Calu3 (cell line): ENCODE measurements at regions of chr10 and their contacts with region 1.

Region 1: GRCh38 chr10:31318854-31319601 is at the start of gene ZEB1:
- DNase-seq: peak; percentile 89
- H3K4me3 Mint-ChIP-seq: peak within 1 kb of the TSS; percentile 83
- H3K27ac Mint-ChIP-seq: peak within 1 kb of the TSS; percentile 82
- H3K4me1 Mint-ChIP-seq: peaks cover 27% of the 10 kb centered on the region
- H3K27me3 Mint-ChIP-seq: no peaks in the 10 kb centered on the region
- CTCF ChIP-seq: peak; percentile 59
- total RNA-seq, gene ZEB1: 7.1 and 10.3 TPM in 2 replicates

Region 2: GRCh38 chr10:31101123-31101522 is 217.9 kb before region 1 on chr10:
- CTCF ChIA-PET with region 1: no interaction called
- intact Hi-C with region 1: loop called (anchors 5 kb)
- DNase-seq: peak; percentile 73
- H3K4me3 Mint-ChIP-seq: peak overlapping the region; percentile 41
- H3K27ac Mint-ChIP-seq: peak overlapping the region; percentile 100
- H3K4me1 Mint-ChIP-seq: peaks cover 26% of the 10 kb centered on the region
- H3K27me3 Mint-ChIP-seq: no peaks in the 10 kb centered on the region
- CTCF ChIP-seq: no peak

Region 3: DNA sequence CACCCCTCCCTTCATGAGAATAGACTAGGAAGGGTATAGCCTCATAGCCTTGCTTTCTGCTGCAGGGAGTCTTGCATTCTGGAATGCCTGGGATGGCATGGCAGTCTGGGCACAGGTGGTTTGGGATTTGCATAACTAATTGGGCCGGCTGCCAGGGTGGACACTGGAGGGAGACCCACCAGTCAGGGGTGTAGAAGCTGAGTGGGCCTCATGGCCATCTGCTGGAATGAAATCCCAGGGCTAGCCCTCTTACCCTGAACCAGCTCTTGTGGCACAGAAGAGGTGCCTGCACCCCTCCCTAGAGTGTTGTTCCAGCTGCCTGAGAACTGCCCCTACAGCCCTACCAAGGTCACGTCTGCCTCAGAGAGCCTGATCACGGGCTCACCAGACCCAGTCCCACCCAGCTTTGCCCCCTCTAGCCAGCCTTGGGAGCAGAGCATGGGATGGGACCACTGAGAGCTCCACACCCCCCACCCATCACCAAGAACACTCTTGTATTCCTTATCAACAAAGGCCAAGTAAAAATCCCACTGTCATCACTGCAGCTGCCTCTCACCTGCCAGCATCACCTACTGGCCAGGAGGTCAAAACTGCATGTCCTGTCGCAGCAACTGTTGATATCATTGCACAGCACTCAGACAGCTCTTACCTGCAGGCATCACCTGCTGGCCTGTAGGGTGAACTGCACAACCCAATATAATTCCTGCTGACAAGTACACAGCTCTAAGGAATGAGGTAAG is 148.9 kb after region 1 on chr10:
- CTCF ChIA-PET with region 1: no interaction called
- intact Hi-C with region 1: loop called (anchors 5 kb)
- DNase-seq: peak; percentile 49
- H3K4me3 Mint-ChIP-seq: no peak overlapping the region
- H3K27ac Mint-ChIP-seq: no peak overlapping the region
- H3K4me1 Mint-ChIP-seq: no peaks in the 10 kb centered on the region
- H3K27me3 Mint-ChIP-seq: no peaks in the 10 kb centered on the region
- CTCF ChIP-seq: peak; percentile 80

Region 4: DNA sequence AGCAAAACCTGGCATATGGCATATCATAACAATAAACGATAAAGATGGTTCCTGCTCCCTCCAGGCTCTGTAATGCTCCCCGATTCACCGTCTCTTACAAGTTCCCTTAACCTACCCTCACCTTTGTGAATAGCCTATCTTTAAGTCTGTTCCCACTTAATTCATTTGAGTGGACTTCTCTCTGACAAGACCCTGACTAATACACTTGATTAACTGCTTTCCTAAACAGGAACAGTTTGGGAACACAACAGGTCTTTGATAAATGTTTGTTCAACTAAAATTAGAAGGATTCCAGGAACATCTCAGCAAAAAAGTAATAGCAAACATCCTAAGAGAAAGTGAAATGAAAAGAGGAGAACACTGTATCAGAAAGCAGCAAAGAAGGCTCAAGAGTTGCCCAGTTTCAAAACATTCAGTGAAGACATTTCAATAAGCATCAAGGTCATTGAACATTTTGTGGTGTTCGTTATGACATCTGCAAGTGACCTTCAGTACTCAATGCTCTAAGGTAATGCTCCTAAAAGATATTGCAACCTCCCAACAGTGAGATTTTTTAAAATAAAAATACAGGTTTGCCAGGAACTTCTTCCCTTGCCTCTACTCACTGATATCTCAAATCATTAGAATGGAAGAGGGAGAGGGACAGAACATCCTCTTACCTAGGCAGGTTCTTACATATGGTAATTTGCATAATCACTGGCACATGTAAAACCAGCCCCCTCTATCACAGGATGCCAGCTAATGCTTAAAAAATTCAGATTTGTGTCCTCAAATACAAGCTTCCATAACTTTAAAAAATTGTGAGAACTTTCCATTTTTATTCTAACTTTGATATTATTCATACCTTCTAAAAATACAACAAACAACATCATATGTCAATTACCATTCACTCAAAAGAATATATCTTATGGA is 621.0 kb after region 1 on chr10:
- CTCF ChIA-PET with region 1: no interaction called
- intact Hi-C with region 1: no loop called
- DNase-seq: no peak
- H3K4me3 Mint-ChIP-seq: peak overlapping the region; percentile 30
- H3K27ac Mint-ChIP-seq: peak overlapping the region; percentile 82
- H3K4me1 Mint-ChIP-seq: peaks cover 56% of the 10 kb centered on the region
- H3K27me3 Mint-ChIP-seq: no peaks in the 10 kb centered on the region
- CTCF ChIP-seq: no peak